GM13977 (cell line): ENCODE measurements at regions of chrX and their contacts with region 1.

Region 1: GRCh38 chrX:13254076-13254785 is 65.6 kb downstream of the ATXN3L start:
- DNase-seq: peak; percentile 21
- CTCF ChIP-seq: peak; percentile 62

Region 2: GRCh38 chrX:12999422-12999821 is 254.8 kb before region 1 on chrX:
- in situ Hi-C with region 1: loop called (anchors 10 kb)
- DNase-seq: no peak
- CTCF ChIP-seq: no peak

Region 3: DNA sequence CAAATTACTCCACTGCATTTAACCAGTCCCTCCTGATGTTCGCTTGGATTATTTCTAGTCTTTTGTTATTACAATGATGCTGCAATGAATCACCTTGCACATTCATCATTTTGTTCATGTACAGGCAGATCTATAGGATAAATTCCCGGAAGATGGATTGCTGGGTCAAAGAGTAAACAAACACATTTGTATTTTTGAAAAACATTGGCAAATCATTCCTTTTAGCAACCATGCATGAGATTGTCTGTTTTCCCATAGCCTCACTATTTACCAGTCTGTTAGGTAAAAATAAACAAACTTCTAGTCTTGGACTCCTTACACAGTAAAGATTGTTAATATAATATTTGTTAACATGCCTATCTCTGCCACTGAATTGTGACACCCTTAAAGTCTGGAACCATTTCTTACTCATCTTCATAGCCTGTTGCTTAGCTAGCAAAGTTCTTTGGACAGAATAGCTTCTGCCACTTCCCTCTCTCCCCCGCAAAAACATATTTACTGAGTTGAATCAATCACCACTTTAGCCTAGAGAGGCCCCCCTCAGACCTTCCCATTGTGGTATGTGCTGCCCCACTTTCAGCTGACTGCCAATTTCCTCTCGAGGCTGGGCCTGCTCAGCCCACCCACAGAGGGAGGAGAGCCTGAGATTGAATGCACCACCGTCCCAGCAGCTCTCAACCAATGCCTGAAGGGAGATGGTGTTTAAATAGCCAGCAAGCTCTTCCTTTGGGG is 174.0 kb after region 1 on chrX:
- in situ Hi-C with region 1: no loop called
- DNase-seq: peak; percentile 18
- CTCF ChIP-seq: peak; percentile 12

Region 4: GRCh38 chrX:13487731-13488523 is 233.7 kb after region 1 on chrX:
- in situ Hi-C with region 1: loop called (anchors 10 kb)
- DNase-seq: peak; percentile 60
- CTCF ChIP-seq: peak; percentile 65

Region 5: GRCh38 chrX:13721819-13722519 is 467.7 kb after region 1 on chrX:
- in situ Hi-C with region 1: loop called (anchors 25 kb)
- DNase-seq: no peak
- CTCF ChIP-seq: no peak